ENCODE measurements at regions of chr14 and their contacts with region 1.

Region 1: DNA sequence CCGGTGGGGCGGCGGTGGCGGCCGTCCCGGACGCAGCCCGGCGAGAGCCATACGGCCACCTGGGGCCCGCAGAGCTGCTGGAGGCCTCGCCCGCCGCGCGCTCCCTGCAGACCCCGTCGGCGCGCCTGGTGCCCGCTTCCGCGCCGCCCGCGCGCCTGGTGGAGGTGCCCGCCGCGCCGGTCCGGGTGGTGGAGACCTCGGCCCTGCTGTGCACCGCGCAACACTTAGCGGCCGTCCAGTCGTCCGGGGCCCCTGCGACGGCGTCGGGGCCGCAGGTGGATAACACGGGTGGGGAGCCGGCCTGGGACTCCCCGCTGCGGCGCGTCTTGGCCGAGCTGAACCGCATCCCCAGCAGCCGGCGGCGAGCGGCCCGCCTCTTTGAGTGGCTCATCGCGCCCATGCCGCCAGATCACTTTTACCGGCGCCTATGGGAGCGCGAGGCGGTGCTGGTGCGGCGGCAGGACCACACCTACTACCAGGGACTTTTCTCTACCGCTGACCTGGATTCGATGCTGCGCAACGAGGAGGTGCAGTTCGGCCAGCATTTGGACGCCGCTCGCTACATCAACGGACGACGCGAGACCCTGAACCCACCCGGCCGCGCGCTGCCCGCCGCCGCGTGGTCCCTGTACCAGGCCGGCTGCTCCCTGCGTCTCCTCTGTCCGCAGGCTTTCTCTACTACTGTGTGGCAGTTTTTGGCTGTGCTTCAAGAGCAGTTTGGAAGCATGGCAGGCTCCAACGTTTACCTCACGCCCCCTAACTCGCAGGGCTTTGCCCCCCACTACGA is 716 bp downstream of the RIOX1 start:
- DNase-seq: peak; percentile 87
- ATAC-seq: peak; percentile 50

Region 2: GRCh38 chr14:73553845-73554244 is 62.4 kb after region 1 on chr14:
- intact Hi-C with region 1: no loop called
- DNase-seq: no peak
- ATAC-seq: no peak

Region 3: GRCh38 chr14:73633116-73634010 is 141.9 kb after region 1 on chr14:
- intact Hi-C with region 1: loop called (anchors 5 kb)
- DNase-seq: peak; percentile 75
- ATAC-seq: peak; percentile 87

Measured in Right ventricle myocardium inferior (tissue), 1 donor.